ENCODE measurements at regions of chr1 and their contacts with region 1.

Region 1: GRCh38 chr1:7704214-7705047 is 66.7 kb upstream of the VAMP3 start:
- DNase-seq: peak; percentile 99
- ATAC-seq: peak; percentile 98
- H3K4me3 Mint-ChIP-seq: peak overlapping the region; percentile 82
- H3K27ac Mint-ChIP-seq: no peak overlapping the region
- H3K4me1 Mint-ChIP-seq: peaks cover 12% of the 10 kb centered on the region
- H3K27me3 Mint-ChIP-seq: peaks cover 11% of the 10 kb centered on the region
- CTCF ChIP-seq: no peak

Region 2: DNA sequence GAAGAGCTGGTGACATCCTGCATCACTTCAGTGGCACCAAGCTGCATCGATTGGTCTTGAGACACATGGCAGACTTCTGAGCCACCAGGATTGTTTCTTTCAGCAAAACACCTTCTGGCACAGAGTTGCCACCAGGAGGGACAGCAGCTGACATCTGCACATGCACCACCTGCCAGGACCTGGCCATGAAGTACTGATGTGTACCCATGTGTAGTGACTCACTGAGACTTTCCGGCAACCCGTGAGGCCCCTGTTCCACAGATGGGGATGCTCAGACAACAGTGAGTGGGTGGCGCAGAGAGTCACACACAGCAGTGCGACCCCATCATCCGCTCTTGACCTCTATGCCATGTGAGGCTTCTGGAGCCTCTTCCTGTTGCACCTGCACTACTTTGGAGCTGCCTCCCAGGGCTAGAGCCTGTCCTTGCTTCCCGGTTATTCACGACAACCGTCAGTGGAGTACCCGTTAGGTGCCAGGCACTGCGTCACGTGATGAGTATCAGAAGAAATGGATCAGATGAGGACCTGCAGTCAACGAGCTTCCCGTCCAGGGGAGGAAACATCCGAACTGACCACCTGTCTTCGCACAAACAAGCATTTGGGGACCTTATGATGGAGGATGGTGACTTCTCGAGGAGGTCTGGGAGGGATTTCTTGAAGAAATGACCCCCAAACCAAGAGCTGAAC is 13.8 kb before region 1 on chr1:
- CTCF ChIA-PET with region 1: no interaction called
- POLR2A ChIA-PET with region 1: no interaction called
- intact Hi-C with region 1: no loop called
- DNase-seq: no peak
- ATAC-seq: no peak
- H3K4me3 Mint-ChIP-seq: no peak overlapping the region
- H3K27ac Mint-ChIP-seq: no peak overlapping the region
- H3K4me1 Mint-ChIP-seq: no peaks in the 10 kb centered on the region
- H3K27me3 Mint-ChIP-seq: peaks cover 38% of the 10 kb centered on the region
- CTCF ChIP-seq: no peak

Region 3: GRCh38 chr1:7752512-7753417 is 48.3 kb after region 1 on chr1:
- CTCF ChIA-PET with region 1: interaction called, 5 read pairs
- POLR2A ChIA-PET with region 1: no interaction called
- intact Hi-C with region 1: loop called (anchors 10 kb)
- DNase-seq: no peak
- ATAC-seq: no peak
- H3K4me3 Mint-ChIP-seq: peak overlapping the region; percentile 17
- H3K27ac Mint-ChIP-seq: no peak overlapping the region
- H3K4me1 Mint-ChIP-seq: peaks cover 5% of the 10 kb centered on the region
- H3K27me3 Mint-ChIP-seq: no peaks in the 10 kb centered on the region
- CTCF ChIP-seq: no peak